AG04450 (cell line): ENCODE measurements at regions of chr13 and their contacts with region 1.

Region 1: DNA sequence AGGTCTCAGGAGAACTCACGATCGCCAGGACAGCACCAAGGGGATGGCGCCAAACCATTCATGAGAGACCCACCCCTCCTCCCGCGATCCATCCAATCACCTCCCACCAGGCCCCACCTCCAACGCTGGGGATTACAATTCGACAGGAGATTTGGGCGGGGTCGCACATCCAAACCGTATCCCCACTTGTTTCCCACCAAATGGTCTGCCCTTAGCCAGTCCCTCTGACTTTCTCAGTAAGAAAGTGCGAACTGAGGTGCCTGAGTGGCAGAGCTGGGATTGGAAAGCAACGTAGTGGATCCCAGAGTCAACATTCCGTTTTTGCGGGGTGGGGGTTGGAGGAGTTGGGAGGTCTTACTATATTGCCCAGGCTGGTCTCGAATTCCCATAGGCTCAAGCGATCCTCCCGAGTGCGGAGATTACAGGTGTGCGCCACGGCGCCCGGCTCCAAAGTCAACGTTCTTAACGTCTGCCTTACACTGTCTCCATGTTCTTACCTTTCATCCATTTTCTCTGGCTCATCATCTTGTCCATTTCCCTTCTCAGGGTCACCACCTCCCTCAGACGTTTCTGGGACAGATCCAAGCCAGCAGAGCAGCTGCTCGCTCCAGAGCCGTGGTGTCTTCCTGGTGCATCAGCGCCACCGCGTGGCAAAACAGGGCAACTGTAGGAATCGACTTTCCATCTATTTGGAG is 102.7 kb upstream of the ABCC4 start:
- DNase-seq: peak; percentile 55
- H3K4me3 ChIP-seq: peak overlapping the region; percentile 57
- H3K27ac ChIP-seq: no peak overlapping the region
- H3K27me3 ChIP-seq: no peaks in the 10 kb centered on the region
- CTCF ChIP-seq: peak; percentile 93

Region 2: GRCh38 chr13:94674609-94675348 is 729.2 kb before region 1 on chr13:
- CTCF ChIA-PET with region 1: interaction called, 10 read pairs
- POLR2A ChIA-PET with region 1: no interaction called
- DNase-seq: no peak
- H3K4me3 ChIP-seq: no peak overlapping the region
- H3K27ac ChIP-seq: no peak overlapping the region
- H3K27me3 ChIP-seq: peaks cover 17% of the 10 kb centered on the region
- CTCF ChIP-seq: peak; percentile 76

Region 3: DNA sequence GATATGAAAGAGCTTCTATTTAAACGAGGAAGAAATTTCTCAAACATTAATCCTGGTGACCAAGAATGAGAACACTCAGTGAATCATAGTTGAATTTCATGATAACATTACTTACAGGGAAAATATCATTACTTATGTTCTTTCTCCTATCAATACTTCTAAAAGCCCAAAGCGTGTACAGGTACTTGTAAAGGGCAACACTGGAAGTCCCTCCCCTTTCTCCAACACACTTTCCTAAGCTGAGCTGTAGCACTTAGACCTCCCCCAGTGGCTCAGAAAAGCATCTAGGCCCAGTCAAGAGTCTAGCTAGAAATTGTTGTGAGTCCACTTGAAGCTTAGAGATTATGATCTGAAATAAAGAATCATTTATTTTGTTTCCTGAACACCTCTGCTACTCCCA is 253.4 kb before region 1 on chr13:
- CTCF ChIA-PET with region 1: interaction called, 13 read pairs
- POLR2A ChIA-PET with region 1: no interaction called
- DNase-seq: no peak
- H3K4me3 ChIP-seq: no peak overlapping the region
- H3K27ac ChIP-seq: no peak overlapping the region
- H3K27me3 ChIP-seq: no peaks in the 10 kb centered on the region
- CTCF ChIP-seq: no peak

Region 4: DNA sequence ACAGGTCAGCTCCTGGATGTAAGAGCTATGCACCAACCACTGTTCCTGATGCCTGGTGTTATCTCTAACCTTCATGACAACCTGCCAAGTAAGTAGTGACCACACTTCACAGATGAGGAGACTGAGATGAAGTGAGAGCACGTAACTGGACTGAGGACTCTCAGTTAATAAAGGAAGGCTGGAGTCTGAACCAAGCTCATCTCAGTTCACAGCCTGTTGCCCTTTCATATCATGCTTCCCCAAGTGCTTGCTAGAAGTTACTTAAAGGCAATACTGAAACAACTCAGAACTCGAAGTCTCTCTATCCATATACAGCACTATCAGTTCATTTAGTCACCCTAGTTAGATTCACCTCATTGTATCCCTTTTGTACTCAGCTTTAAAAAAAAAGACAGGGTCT is 222.4 kb before region 1 on chr13:
- CTCF ChIA-PET with region 1: interaction called, 13 read pairs
- POLR2A ChIA-PET with region 1: no interaction called
- DNase-seq: no peak
- H3K4me3 ChIP-seq: no peak overlapping the region
- H3K27ac ChIP-seq: no peak overlapping the region
- H3K27me3 ChIP-seq: no peaks in the 10 kb centered on the region
- CTCF ChIP-seq: no peak

Region 5: GRCh38 chr13:95378603-95379002 is 25.4 kb before region 1 on chr13:
- CTCF ChIA-PET with region 1: interaction called, 16 read pairs
- POLR2A ChIA-PET with region 1: no interaction called
- DNase-seq: no peak
- H3K4me3 ChIP-seq: no peak overlapping the region
- H3K27ac ChIP-seq: no peak overlapping the region
- H3K27me3 ChIP-seq: no peaks in the 10 kb centered on the region
- CTCF ChIP-seq: no peak